A673 (cell line): ENCODE measurements at regions of chr13 and their contacts with region 1.

Region 1: GRCh38 chr13:28475916-28476725 is 18.8 kb downstream of the FLT1 start:
- DNase-seq: peak; percentile 70
- H3K4me3 ChIP-seq: no peak overlapping the region
- H3K27ac ChIP-seq: no peak overlapping the region
- H3K4me1 ChIP-seq: peaks cover 15% of the 10 kb centered on the region
- H3K27me3 ChIP-seq: no peaks in the 10 kb centered on the region
- CTCF ChIP-seq: no peak

Region 2: GRCh38 chr13:28753243-28753887 is 277.2 kb after region 1 on chr13:
- CTCF ChIA-PET with region 1: no interaction called
- POLR2A ChIA-PET with region 1: interaction called, 16 read pairs
- intact Hi-C with region 1: no loop called
- DNase-seq: peak; percentile 90
- H3K4me3 ChIP-seq: no peak overlapping the region
- H3K27ac ChIP-seq: peak overlapping the region; percentile 73
- H3K4me1 ChIP-seq: peaks cover 12% of the 10 kb centered on the region
- H3K27me3 ChIP-seq: no peaks in the 10 kb centered on the region
- CTCF ChIP-seq: no peak